Activated CD4-positive, alpha-beta T cell treated with anti-CD3 and anti-CD28 coated beads, Interleukin-2, amount 10 ng/mL, durations not matched to agents 24 days and 14 days (primary cell): ENCODE measurements at regions of chr4 and their contacts with region 1.

Region 1: GRCh38 chr4:87220094-87220822 is at the start of gene KLHL8:
- DNase-seq: peak; percentile 97
- H3K4me3 Mint-ChIP-seq: peak within 1 kb of the TSS; percentile 89
- H3K27ac Mint-ChIP-seq: peak within 1 kb of the TSS; percentile 95
- H3K4me1 Mint-ChIP-seq: peaks cover 10% of the 10 kb centered on the region
- H3K27me3 Mint-ChIP-seq: peaks cover 9% of the 10 kb centered on the region
- total RNA-seq, gene KLHL8: 16.5 and 17.1 TPM in 2 replicates

Region 2: GRCh38 chr4:87150498-87151261 is 69.6 kb before region 1 on chr4:
- intact Hi-C with region 1: loop called (anchors 5 kb)
- DNase-seq: peak; percentile 90
- H3K4me3 Mint-ChIP-seq: no peak overlapping the region
- H3K27ac Mint-ChIP-seq: no peak overlapping the region
- H3K4me1 Mint-ChIP-seq: peaks cover 3% of the 10 kb centered on the region
- H3K27me3 Mint-ChIP-seq: no peaks in the 10 kb centered on the region